ENCODE measurements at regions of chr18 and their contacts with region 1.

Region 1: DNA sequence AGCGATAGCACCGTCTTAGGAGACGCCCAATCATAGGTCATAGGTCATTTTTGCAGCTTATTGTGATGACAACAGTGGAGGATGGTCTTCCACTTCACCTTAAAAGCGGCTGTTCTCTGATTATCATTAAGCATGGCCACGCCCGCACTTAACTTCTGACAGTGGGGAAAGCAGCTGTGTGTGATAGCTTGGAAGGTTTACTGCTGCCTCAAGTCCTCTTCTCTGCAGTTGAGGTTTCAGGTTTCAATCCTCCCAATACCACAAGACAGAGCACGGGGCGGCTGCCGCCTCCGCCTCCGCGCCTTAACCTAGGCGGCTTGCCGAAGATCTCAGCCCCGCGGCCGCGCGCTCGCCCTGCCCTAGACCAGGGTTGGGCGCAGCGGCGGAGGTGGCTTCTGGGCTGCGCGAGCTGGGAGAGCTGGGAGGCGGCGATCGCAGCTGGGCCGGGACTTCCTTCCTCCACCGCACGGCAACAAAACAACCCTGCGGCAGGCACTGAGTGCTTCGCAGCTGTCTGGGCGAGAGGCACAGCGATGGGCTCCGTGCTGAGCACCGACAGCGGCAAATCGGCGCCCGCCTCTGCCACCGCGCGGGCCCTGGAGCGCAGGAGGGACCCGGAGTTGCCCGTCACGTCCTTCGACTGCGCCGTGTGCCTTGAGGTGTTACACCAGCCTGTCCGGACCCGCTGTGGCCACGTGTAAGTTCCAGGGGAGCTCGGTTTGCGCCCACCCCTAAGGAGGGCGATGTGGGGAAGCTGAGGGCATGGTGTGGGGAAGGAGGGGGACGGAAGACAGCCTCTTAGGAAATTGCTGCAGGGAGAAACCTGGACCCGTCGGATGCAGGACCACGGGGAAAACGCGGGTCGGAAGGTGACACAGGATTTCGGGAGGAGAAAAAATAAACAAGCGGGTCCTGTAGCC is at the start of gene RNF125:
- DNase-seq: peak; percentile 96
- H3K4me3 Mint-ChIP-seq: peak within 1 kb of the TSS; percentile 98
- H3K27ac Mint-ChIP-seq: peak within 1 kb of the TSS; percentile 100
- H3K4me1 Mint-ChIP-seq: peaks cover 61% of the 10 kb centered on the region
- H3K27me3 Mint-ChIP-seq: peaks cover 7% of the 10 kb centered on the region

Region 2: GRCh38 chr18:32048507-32049091 is 30.0 kb after region 1 on chr18:
- CTCF ChIA-PET with region 1: interaction called, 18 read pairs
- DNase-seq: no peak
- H3K4me3 Mint-ChIP-seq: no peak overlapping the region
- H3K27ac Mint-ChIP-seq: peak overlapping the region; percentile 87
- H3K4me1 Mint-ChIP-seq: peaks cover 39% of the 10 kb centered on the region
- H3K27me3 Mint-ChIP-seq: no peaks in the 10 kb centered on the region

Region 3: GRCh38 chr18:32092422-32093101 is 74.0 kb after region 1 on chr18:
- CTCF ChIA-PET with region 1: interaction called, 10 read pairs
- DNase-seq: peak; percentile 100
- H3K4me3 Mint-ChIP-seq: peak overlapping the region; percentile 99
- H3K27ac Mint-ChIP-seq: peak overlapping the region; percentile 98
- H3K4me1 Mint-ChIP-seq: peaks cover 46% of the 10 kb centered on the region
- H3K27me3 Mint-ChIP-seq: no peaks in the 10 kb centered on the region